Mammary epithelial cell (primary cell): ENCODE measurements at regions of chr15 and their contacts with region 1.

Region 1: GRCh38 chr15:39602143-39602542 is 21.3 kb downstream of the THBS1 start:
- DNase-seq: no peak
- H3K4me3 ChIP-seq: no peak overlapping the region
- H3K27ac ChIP-seq: no peak overlapping the region
- H3K4me1 ChIP-seq: no peaks in the 10 kb centered on the region
- H3K27me3 ChIP-seq: no peaks in the 10 kb centered on the region
- CTCF ChIP-seq: peak in 1 of 2 donors; percentile 19

Region 2: GRCh38 chr15:39680868-39681267 is 78.7 kb after region 1 on chr15:
- CTCF ChIA-PET with region 1: no interaction called
- dilution Hi-C with region 1: no loop called
- in situ Hi-C with region 1: no loop called
- intact Hi-C with region 1: loop called (anchors 5 kb)
- DNase-seq: no peak
- H3K4me3 ChIP-seq: no peak overlapping the region
- H3K27ac ChIP-seq: no peak overlapping the region
- H3K4me1 ChIP-seq: no peaks in the 10 kb centered on the region
- H3K27me3 ChIP-seq: no peaks in the 10 kb centered on the region
- CTCF ChIP-seq: no peak